RWPE1 (cell line): ENCODE measurements at regions of chr9 and their contacts with region 1.

Region 1: GRCh38 chr9:23779220-23779619 is 46.8 kb downstream of the ELAVL2 start:
- DNase-seq: no peak
- H3K27ac ChIP-seq: no peak overlapping the region; the same call in 1 of the 2 replicates
- CTCF ChIP-seq: no peak

Region 2: GRCh38 chr9:23746317-23746716 is 32.9 kb before region 1 on chr9:
- CTCF ChIA-PET with region 1: no interaction called
- POLR2A ChIA-PET with region 1: interaction called, 12 read pairs
- DNase-seq: peak; percentile 29
- H3K27ac ChIP-seq: no peak overlapping the region
- CTCF ChIP-seq: no peak